ENCODE measurements at regions of chr15 and their contacts with region 1.

Region 1: DNA sequence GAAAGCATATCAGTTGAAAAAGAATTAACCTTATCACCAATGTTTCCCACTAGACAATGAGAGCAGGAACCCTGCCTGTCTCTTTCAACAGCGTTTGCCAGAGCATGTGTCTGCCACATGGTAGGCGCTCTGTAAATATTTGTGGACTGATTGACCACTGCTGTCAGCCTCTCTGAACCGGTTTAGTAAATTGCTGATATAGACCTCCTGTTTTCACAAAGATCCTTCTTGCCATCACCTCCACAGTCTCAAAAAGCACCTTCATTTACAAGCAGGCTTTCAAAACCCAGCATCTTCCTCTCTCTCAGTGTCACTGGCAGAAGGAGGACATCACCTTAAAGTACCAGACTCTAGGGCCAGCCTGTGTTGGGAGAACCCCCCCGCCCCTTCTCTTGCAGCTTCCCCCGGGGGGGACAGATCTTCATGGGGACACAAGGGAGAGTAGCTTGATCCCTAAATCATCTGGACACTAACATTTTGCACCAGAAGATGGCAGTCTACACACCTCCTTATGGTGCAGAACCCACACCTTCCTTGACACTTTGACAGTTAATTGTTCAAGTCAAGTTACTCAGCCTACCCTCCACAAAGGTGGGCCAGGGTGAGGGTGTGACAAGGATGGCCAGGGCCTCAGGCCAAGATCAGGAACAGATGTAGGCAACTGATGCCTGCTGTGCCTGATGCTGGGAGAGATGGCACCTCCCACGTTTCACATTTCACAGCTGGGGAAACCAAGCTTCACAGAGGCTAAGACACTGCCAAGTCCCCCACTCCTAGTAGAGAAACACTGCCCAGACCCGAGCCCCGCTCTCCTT is 37.8 kb upstream of the USP3 start:
- DNase-seq: peak; percentile 46
- H3K4me3 Mint-ChIP-seq: no peak overlapping the region
- H3K27ac Mint-ChIP-seq: peak overlapping the region; percentile 35
- H3K4me1 Mint-ChIP-seq: peaks cover 23% of the 10 kb centered on the region
- H3K27me3 Mint-ChIP-seq: no peaks in the 10 kb centered on the region

Region 2: GRCh38 chr15:63448266-63448665 is 18.3 kb before region 1 on chr15:
- CTCF ChIA-PET with region 1: interaction called, 18 read pairs
- POLR2A ChIA-PET with region 1: no interaction called
- intact Hi-C with region 1: no loop called
- DNase-seq: no peak
- H3K4me3 Mint-ChIP-seq: no peak overlapping the region
- H3K27ac Mint-ChIP-seq: no peak overlapping the region
- H3K4me1 Mint-ChIP-seq: peaks cover 17% of the 10 kb centered on the region
- H3K27me3 Mint-ChIP-seq: no peaks in the 10 kb centered on the region

Region 3: GRCh38 chr15:63497642-63498467 is 31.3 kb after region 1 on chr15:
- CTCF ChIA-PET with region 1: interaction called, 15 read pairs
- POLR2A ChIA-PET with region 1: no interaction called
- intact Hi-C with region 1: no loop called
- DNase-seq: peak; percentile 77
- H3K4me3 Mint-ChIP-seq: no peak overlapping the region
- H3K27ac Mint-ChIP-seq: no peak overlapping the region
- H3K4me1 Mint-ChIP-seq: peaks cover 80% of the 10 kb centered on the region
- H3K27me3 Mint-ChIP-seq: no peaks in the 10 kb centered on the region

Region 4: GRCh38 chr15:63531586-63531985 is 65.0 kb after region 1 on chr15:
- CTCF ChIA-PET with region 1: interaction called, 14 read pairs
- POLR2A ChIA-PET with region 1: no interaction called
- intact Hi-C with region 1: no loop called
- DNase-seq: no peak
- H3K4me3 Mint-ChIP-seq: no peak overlapping the region
- H3K27ac Mint-ChIP-seq: no peak overlapping the region
- H3K4me1 Mint-ChIP-seq: peaks cover 90% of the 10 kb centered on the region
- H3K27me3 Mint-ChIP-seq: no peaks in the 10 kb centered on the region

Region 5: GRCh38 chr15:63600616-63601025 is 134.0 kb after region 1 on chr15:
- CTCF ChIA-PET with region 1: interaction called, 69 read pairs
- POLR2A ChIA-PET with region 1: interaction called, 11 read pairs
- intact Hi-C with region 1: loop called (anchors 1 kb)
- DNase-seq: peak; percentile 93
- H3K4me3 Mint-ChIP-seq: peak overlapping the region; percentile 93
- H3K27ac Mint-ChIP-seq: peak overlapping the region; percentile 96
- H3K4me1 Mint-ChIP-seq: peaks cover 54% of the 10 kb centered on the region
- H3K27me3 Mint-ChIP-seq: no peaks in the 10 kb centered on the region

Measured in activated CD4-positive, alpha-beta memory T cell treated with anti-CD3 and anti-CD28 coated beads for 36 hours (primary cell).